Calu3 (cell line): ENCODE measurements at regions of chr5 and their contacts with region 1.

Region 1: GRCh38 chr5:122704243-122705036 is 70.4 kb upstream of the SNX2 start:
- DNase-seq: no peak
- H3K4me3 Mint-ChIP-seq: no peak overlapping the region
- H3K27ac Mint-ChIP-seq: no peak overlapping the region
- H3K4me1 Mint-ChIP-seq: no peaks in the 10 kb centered on the region
- H3K27me3 Mint-ChIP-seq: no peaks in the 10 kb centered on the region
- CTCF ChIP-seq: peak; percentile 33

Region 2: GRCh38 chr5:122192497-122193496 is 511.6 kb before region 1 on chr5:
- CTCF ChIA-PET with region 1: no interaction called
- intact Hi-C with region 1: loop called (anchors 10 kb)
- DNase-seq: peak; percentile 62
- H3K4me3 Mint-ChIP-seq: no peak overlapping the region
- H3K27ac Mint-ChIP-seq: no peak overlapping the region
- H3K4me1 Mint-ChIP-seq: no peaks in the 10 kb centered on the region
- H3K27me3 Mint-ChIP-seq: peaks cover 3% of the 10 kb centered on the region
- CTCF ChIP-seq: peak; percentile 65

Region 3: DNA sequence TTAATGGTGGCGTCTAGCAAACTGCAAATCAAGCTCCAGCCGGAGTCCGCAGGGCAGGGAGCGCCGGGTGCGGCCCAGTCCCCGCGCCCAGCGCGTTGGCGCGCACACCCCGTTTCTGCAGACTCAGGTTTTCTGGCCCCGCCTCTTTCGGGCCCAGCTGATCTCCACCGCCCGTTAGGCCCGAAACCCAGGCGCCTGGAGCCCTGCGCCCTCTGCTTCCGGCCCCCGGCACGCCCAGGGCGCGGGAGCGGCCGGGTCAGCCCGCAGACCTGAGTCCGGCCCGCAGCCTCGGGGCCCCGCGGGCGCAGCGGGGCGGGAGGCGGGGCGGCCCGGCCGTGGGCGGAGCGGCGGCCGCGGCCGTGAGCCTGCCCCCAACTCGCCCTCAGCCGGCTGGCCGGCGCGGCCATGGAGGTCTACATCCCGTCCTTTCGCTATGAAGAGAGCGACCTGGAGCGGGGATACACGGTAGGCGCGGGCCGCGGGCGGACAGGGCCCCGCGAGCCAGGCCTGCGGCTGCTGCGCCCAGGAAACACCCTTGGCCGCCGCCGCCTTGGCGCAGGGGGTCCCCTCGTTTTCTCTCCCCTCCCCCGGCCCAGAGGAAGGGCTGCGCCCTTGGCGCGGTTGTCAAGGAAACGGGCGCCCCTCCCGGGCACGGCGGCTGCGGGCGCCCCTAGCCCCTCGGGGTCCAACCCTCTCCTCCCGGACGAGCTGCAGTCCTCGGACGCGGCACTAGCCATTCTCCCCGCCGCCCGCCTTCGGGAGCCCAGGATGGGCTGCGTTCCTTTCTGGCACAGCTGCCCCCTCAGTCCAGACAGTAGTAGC is 141.0 kb after region 1 on chr5 and contains the start of gene SNX24:
- CTCF ChIA-PET with region 1: interaction called, 3 read pairs
- intact Hi-C with region 1: loop called (anchors 5 kb)
- DNase-seq: peak; percentile 85
- H3K4me3 Mint-ChIP-seq: peak within 1 kb of the TSS; percentile 84
- H3K27ac Mint-ChIP-seq: peak within 1 kb of the TSS; percentile 88
- H3K4me1 Mint-ChIP-seq: peaks cover 41% of the 10 kb centered on the region
- H3K27me3 Mint-ChIP-seq: no peaks in the 10 kb centered on the region
- CTCF ChIP-seq: no peak
- total RNA-seq, gene SNX24: 16.1 and 23.5 TPM in 2 replicates

Region 4: DNA sequence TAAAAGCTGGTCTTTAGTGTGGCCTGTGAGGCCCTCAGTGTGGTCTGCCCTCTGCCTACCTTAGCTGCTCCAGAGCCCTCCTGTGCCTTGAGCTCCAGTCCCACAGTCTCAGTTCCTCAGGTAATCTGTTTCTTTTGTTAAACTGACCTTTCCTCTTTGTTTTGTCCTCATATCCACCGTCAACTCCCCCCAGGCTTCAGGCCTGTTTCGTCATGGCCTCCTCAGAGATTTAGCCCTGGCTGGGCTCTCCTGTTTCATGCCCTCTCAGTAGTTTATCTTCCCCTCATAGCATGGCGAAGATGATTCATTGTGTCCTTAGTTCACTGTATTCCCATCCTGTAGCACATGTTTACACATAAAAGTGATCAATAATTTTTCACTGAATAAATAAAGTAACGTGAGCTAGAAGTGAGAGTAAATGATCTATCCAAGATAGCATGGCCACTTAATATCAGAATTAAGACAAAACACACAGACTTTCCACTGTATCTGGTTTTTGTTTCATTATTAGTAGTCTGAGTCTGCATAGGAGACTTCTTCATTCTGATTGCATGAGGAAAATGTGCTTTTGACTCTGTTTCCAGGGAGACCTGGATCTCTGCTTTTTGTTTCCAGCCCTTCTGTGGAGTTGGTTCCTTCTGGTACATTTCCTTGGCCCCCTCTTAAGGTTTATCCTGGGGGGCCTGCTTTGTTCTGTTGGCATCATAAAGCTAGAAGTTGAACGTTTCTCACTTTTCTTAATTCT is 211.4 kb after region 1 on chr5:
- CTCF ChIA-PET with region 1: no interaction called
- intact Hi-C with region 1: no loop called
- DNase-seq: peak; percentile 35
- H3K4me3 Mint-ChIP-seq: peak overlapping the region; percentile 14
- H3K27ac Mint-ChIP-seq: peak overlapping the region; percentile 10
- H3K4me1 Mint-ChIP-seq: peaks cover 21% of the 10 kb centered on the region
- H3K27me3 Mint-ChIP-seq: no peaks in the 10 kb centered on the region
- CTCF ChIP-seq: no peak

Region 5: GRCh38 chr5:122999945-123000563 is 295.6 kb after region 1 on chr5:
- CTCF ChIA-PET with region 1: interaction called, 3 read pairs
- intact Hi-C with region 1: loop called (anchors 10 kb)
- DNase-seq: peak; percentile 38
- H3K4me3 Mint-ChIP-seq: no peak overlapping the region
- H3K27ac Mint-ChIP-seq: no peak overlapping the region
- H3K4me1 Mint-ChIP-seq: no peaks in the 10 kb centered on the region
- H3K27me3 Mint-ChIP-seq: no peaks in the 10 kb centered on the region
- CTCF ChIP-seq: peak; percentile 10

Region 6: DNA sequence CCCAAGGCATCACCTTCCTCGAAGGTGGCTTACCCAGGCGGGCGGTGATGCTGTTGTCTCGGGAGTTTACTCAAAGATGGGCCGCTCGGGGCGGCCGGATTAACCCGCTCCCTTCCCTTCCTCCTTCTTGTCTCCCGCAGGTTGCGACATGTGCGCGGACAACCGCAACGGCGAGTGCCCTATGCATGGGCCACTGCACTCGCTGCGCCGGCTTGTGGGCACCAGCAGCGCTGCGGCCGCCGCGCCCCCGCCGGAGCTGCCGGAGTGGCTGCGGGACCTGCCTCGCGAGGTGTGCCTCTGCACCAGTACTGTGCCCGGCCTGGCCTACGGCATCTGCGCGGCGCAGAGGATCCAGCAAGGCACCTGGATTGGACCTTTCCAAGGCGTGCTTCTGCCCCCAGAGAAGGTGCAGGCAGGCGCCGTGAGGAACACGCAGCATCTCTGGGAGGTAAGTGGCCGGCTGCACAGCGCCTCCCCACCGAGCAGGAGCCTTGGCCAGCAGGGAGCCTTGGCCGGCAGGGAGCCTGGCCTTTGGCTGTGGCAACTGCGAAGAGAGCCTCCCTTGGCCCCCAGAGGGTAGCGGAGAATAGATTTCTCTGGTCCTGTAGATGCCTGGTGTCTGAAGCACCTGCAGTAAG is 395.2 kb after region 1 on chr5:
- CTCF ChIA-PET with region 1: no interaction called
- intact Hi-C with region 1: loop called (anchors 10 kb)
- DNase-seq: peak; percentile 82
- H3K4me3 Mint-ChIP-seq: peak overlapping the region; percentile 67
- H3K27ac Mint-ChIP-seq: no peak overlapping the region
- H3K4me1 Mint-ChIP-seq: peaks cover 16% of the 10 kb centered on the region
- H3K27me3 Mint-ChIP-seq: peaks cover 19% of the 10 kb centered on the region
- CTCF ChIP-seq: peak; percentile 14